A673 (cell line): ENCODE measurements at regions of chr12 and their contacts with region 1.

Region 1: DNA sequence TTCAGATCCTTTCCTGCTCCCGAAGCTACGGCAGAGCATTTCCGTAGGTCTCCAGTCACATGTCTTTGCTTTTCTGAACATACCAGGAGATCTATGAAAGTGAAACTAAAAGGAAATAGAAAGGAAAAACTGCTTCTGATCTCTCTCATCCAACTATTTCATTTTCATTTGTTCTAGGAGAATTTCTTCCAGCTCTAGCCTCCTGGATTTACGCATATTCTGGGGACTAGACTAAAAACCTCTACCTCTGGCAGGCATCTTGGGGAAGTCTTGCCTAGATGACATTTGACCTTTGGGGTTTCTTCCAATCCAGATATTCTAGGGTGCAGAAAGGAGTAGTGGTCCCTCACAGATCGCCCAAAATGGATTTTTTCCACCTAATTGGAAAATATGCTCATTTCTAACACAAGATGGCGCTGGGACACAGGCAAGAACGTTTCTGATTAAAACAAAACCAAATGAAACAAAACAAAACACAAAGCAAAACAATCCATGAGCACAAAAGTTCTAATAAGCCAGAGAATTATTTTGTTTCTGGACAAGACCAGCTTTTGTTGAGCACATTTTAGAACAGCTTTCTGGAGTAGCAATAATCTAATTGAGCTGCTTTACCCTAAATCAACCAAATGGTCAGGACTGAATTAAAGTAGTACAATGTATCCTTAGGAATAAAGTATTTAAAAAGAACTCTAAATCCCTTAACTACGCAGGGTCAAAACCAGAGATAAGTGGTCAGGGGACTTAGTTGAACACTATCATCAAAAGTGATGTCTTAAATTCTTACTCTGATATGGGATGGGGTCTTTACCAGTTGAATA is 12.3 kb upstream of the PARP11 start:
- DNase-seq: peak; percentile 53
- H3K4me3 ChIP-seq: peak overlapping the region; percentile 0
- H3K27ac ChIP-seq: no peak overlapping the region
- H3K4me1 ChIP-seq: no peaks in the 10 kb centered on the region
- H3K27me3 ChIP-seq: peaks cover 8% of the 10 kb centered on the region
- CTCF ChIP-seq: peak; percentile 77

Region 2: GRCh38 chr12:4037747-4038312 is 152.3 kb after region 1 on chr12:
- CTCF ChIA-PET with region 1: interaction called, 14 read pairs
- POLR2A ChIA-PET with region 1: no interaction called
- intact Hi-C with region 1: loop called (anchors 2 kb)
- DNase-seq: peak; percentile 43
- H3K4me3 ChIP-seq: no peak overlapping the region
- H3K27ac ChIP-seq: no peak overlapping the region
- H3K4me1 ChIP-seq: no peaks in the 10 kb centered on the region
- H3K27me3 ChIP-seq: peaks cover 14% of the 10 kb centered on the region
- CTCF ChIP-seq: peak; percentile 69